ENCODE measurements at regions of chr17 and their contacts with region 1.

Region 1: GRCh38 chr17:59676716-59677115 is 30.5 kb downstream of the PTRH2 start:
- DNase-seq: no peak
- ATAC-seq: no peak

Region 2: DNA sequence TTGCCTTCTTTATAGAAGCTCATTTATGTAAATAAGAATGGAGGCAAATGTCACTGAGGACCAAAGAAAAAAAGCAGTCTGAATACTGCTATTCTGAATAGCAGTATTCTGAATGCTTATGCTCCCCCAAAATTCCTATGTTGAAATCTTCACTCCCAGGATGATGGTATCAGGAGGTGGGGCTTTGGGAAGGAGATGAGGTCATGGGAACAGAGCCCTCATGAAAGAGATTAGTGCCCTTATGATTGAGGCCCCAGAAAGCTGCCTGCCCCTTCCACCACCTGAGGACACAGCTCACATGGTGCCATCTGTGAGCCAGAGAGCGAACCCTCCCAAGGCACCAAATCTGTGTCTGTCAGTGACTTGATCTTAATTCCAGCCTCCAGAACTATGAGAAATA is 373.2 kb after region 1 on chr17:
- intact Hi-C with region 1: loop called (anchors 10 kb)
- DNase-seq: no peak
- ATAC-seq: no peak

Measured in Right ventricle myocardium inferior (tissue), 1 donor.